Caco-2 (cell line): ENCODE measurements at regions of chrX and their contacts with region 1.

Region 1: DNA sequence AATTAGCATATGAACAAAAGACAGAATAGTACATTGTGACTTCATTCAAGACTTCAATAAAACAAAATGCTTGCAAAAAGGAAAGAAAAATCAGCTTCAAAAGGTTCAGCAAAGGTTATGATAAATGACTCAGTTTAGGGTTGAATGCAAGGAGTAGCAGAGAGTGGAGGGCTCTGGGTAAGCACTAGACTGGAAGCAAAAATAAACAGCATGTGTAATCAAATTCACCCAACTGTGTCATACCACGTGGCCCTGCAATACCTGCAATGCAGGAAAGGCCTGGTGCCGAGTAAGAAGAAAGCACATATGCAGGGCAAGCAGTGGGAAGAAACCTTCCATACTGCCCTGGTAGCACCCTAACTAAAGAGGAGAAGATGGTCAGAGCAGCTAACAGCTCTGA is 88.7 kb downstream of the ATP11C start:
- DNase-seq: no peak
- H3K4me3 ChIP-seq: no peak overlapping the region
- H3K4me3 Mint-ChIP-seq: no peak overlapping the region
- H3K27ac Mint-ChIP-seq: no peak overlapping the region
- H3K4me1 ChIP-seq: no peaks in the 10 kb centered on the region
- H3K4me1 Mint-ChIP-seq: no peaks in the 10 kb centered on the region
- H3K27me3 ChIP-seq: no peaks in the 10 kb centered on the region
- H3K27me3 Mint-ChIP-seq: no peaks in the 10 kb centered on the region
- CTCF ChIP-seq: no peak

Region 2: GRCh38 chrX:138775517-138775916 is 1068.6 kb before region 1 on chrX:
- CTCF ChIA-PET with region 1: no interaction called
- POLR2A ChIA-PET with region 1: no interaction called
- intact Hi-C with region 1: no loop called
- DNase-seq: peak in 1 of 2 experiments; percentile 1
- H3K4me3 ChIP-seq: no peak overlapping the region
- H3K4me3 Mint-ChIP-seq: no peak overlapping the region
- H3K27ac Mint-ChIP-seq: no peak overlapping the region
- H3K4me1 ChIP-seq: no peaks in the 10 kb centered on the region
- H3K4me1 Mint-ChIP-seq: no peaks in the 10 kb centered on the region
- H3K27me3 ChIP-seq: no peaks in the 10 kb centered on the region
- H3K27me3 Mint-ChIP-seq: no peaks in the 10 kb centered on the region
- CTCF ChIP-seq: peak in 1 of 2 experiments; percentile 32

Region 3: GRCh38 chrX:139811942-139812629 is 32.1 kb before region 1 on chrX:
- CTCF ChIA-PET with region 1: no interaction called
- POLR2A ChIA-PET with region 1: no interaction called
- intact Hi-C with region 1: no loop called
- DNase-seq: no peak
- H3K4me3 ChIP-seq: no peak overlapping the region
- H3K4me3 Mint-ChIP-seq: no peak overlapping the region
- H3K27ac Mint-ChIP-seq: no peak overlapping the region
- H3K4me1 ChIP-seq: no peaks in the 10 kb centered on the region
- H3K4me1 Mint-ChIP-seq: no peaks in the 10 kb centered on the region
- H3K27me3 ChIP-seq: no peaks in the 10 kb centered on the region
- H3K27me3 Mint-ChIP-seq: no peaks in the 10 kb centered on the region
- CTCF ChIP-seq: no peak

Region 4: GRCh38 chrX:139909712-139910111 is 65.5 kb after region 1 on chrX:
- CTCF ChIA-PET with region 1: no interaction called
- POLR2A ChIA-PET with region 1: interaction called, 3 read pairs
- intact Hi-C with region 1: loop called (anchors 10 kb)
- DNase-seq: no peak
- H3K4me3 ChIP-seq: no peak overlapping the region
- H3K4me3 Mint-ChIP-seq: no peak overlapping the region
- H3K27ac Mint-ChIP-seq: no peak overlapping the region
- H3K4me1 ChIP-seq: no peaks in the 10 kb centered on the region; the same call in 1 of the 2 replicates
- H3K4me1 Mint-ChIP-seq: peaks cover 4% of the 10 kb centered on the region
- H3K27me3 ChIP-seq: no peaks in the 10 kb centered on the region
- H3K27me3 Mint-ChIP-seq: no peaks in the 10 kb centered on the region
- CTCF ChIP-seq: no peak

Region 5: DNA sequence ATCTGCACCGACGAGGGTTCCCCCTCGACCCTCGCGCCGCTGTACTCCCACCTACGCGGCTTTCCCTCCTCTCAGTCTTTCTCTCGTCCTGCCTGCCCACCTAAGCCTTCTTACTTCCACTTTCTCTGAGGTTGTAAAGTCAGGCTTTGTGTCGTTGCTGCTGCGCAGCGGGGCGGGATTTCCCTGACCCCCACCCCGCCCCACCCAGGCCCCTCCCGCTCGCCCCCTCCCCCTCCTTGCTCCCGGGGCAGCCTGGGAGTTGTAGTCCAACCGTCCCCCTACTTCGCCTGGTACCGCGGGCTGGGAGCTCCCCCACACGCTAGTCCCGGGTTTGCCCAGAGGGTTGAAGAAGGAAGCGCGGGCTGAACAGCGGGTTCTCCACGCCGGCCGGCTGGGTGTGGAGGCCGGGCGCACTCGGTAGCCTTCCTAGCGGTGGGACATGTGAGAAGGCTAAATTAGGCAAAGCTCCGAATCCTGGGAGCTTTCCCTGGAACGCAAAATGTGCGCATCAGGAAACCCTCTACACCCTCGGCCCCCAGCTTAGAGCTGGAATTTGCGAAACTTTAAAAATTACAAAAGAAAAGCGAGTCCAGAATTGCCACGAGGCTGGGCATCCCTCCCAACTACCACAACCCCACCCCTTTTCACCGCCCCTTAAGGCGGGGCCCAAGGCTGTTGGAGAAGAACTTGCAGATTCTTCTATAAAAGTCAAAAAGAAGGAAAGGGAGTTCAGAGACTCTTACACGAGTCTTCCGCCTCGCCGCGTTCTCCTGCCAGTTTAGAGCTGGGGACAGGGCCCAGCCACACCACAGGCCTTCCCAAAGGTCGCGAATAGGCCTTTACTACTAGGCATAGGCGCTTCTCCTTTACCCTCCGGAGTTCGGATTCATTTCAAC is 89.0 kb after region 1 on chrX and contains the start of gene ATP11C:
- CTCF ChIA-PET with region 1: no interaction called
- POLR2A ChIA-PET with region 1: no interaction called
- intact Hi-C with region 1: loop called (anchors 5 kb)
- DNase-seq: peak; percentile 83 to 90
- H3K4me3 ChIP-seq: peak within 1 kb of the TSS; percentile 79
- H3K4me3 Mint-ChIP-seq: peak within 1 kb of the TSS; percentile 92
- H3K27ac Mint-ChIP-seq: peak within 1 kb of the TSS; percentile 95
- H3K4me1 ChIP-seq: no peaks in the 10 kb centered on the region
- H3K4me1 Mint-ChIP-seq: no peaks in the 10 kb centered on the region
- H3K27me3 ChIP-seq: no peaks in the 10 kb centered on the region
- H3K27me3 Mint-ChIP-seq: no peaks in the 10 kb centered on the region
- CTCF ChIP-seq: no peak
- total RNA-seq, gene ATP11C: 12.2 and 15.3 TPM in 2 replicates